Activated CD4-positive, alpha-beta T cell treated with anti-CD3 and anti-CD28 coated beads for 36 hours (primary cell): ENCODE measurements at regions of chr4 and their contacts with region 1.

Region 1: DNA sequence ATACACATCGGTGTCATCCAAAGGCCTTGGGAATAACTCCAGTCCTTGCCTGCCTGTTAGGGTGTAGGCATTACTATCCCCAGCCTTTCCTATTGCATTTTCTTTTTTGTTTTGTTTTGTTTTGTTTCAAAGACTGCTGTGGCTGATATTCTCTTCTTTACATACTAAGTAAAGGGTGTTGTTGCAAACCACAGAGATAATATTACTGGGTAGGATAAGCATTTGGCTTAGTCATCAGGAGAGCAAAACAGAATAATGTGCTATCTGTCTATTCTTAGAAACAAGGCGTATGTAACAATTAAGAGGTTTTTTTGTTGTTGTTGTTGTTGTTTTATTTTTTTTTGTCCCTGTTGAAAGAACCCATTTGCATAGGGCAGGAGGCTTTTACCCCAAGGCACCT is 41.8 kb downstream of the UGT2B28 start:
- DNase-seq: no peak
- ATAC-seq: no peak
- H3K4me3 Mint-ChIP-seq: no peak overlapping the region
- H3K27ac Mint-ChIP-seq: no peak overlapping the region
- H3K4me1 Mint-ChIP-seq: no peaks in the 10 kb centered on the region
- H3K27me3 Mint-ChIP-seq: no peaks in the 10 kb centered on the region

Region 2: DNA sequence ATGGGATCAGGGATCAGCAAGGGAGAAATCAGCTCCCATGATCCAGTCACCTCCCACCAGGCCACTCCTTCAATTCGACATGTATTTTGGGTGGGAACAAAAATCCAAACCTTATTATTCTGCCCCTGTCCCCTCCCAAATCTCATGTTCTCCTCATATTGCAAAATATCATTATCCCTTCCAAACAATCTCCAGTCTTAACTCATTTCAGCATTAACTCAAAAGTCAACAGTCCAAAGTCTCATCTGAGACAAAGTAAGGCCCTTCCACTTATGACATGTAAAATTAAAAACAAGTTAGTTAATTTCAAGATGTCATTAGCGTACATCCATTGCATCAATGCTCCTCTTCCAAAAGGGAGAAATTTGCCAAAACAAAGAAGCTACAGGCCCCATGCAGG is 151.6 kb after region 1 on chr4:
- CTCF ChIA-PET with region 1: no interaction called
- POLR2A ChIA-PET with region 1: no interaction called
- intact Hi-C with region 1: no loop called
- DNase-seq: no peak
- ATAC-seq: no peak
- H3K4me3 Mint-ChIP-seq: no peak overlapping the region
- H3K27ac Mint-ChIP-seq: no peak overlapping the region
- H3K4me1 Mint-ChIP-seq: no peaks in the 10 kb centered on the region
- H3K27me3 Mint-ChIP-seq: no peaks in the 10 kb centered on the region

Region 3: DNA sequence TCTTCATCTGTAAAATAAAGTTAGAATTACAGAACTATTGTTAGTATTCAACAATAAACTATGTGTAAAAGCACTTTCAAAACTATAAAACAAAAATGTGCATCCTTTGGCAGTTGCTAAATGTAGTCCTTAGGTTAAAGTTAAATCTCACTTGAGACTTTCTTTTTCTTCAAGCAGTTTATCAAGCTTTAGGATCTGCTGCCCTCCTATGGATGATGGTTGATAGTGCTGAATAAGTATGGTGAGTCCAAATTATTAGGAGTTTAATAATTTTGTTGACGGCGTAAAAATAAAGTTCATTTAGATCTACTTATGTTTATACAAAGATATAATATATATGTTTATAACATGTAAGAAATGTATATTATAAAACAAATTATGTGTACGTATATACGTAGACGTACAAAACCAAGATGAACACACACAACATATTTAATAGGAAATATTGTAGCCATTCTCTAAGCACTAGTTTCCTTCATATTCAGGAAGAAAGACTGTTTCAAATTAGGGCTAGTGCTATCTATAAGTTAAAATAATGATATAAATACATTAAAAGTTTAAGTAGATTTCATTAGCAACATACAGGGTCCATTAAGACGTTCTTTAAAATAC is 295.1 kb after region 1 on chr4:
- CTCF ChIA-PET with region 1: no interaction called
- POLR2A ChIA-PET with region 1: no interaction called
- intact Hi-C with region 1: loop called in 1 of 2 experiments (anchors 10 kb)
- DNase-seq: no peak
- ATAC-seq: no peak
- H3K4me3 Mint-ChIP-seq: no peak overlapping the region
- H3K27ac Mint-ChIP-seq: no peak overlapping the region
- H3K4me1 Mint-ChIP-seq: no peaks in the 10 kb centered on the region
- H3K27me3 Mint-ChIP-seq: no peaks in the 10 kb centered on the region

Region 4: DNA sequence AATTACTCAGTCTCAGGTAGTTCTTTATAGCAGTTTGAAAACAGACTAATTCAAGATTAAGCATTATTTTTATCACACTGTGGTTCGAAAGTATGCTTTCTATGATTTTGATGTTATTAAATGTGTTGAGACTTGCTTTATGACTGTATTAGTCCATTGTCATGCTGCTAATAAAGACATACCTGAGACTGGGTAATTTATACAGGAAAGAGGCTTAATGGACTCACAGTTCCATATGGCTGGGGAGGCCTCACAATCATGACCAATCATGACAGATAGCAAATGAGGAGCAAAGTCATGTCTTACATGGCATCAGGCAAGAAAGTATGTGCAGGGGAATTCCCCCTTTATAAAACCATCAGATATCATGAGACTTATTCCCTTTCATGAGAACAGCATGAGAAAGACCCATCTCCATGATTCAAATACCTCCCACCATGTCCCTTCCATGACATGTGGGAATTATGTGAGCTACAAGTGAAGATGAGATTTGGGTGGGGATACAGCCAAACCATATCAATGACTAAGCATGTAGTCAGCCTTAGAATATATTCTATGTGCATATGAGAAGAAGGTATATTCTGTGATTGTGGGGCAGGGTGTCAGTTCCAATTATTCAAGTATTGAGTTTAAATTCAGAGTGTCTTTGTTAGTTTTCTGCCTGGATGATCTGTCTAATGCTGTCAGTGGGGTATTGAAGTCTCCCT is 375.6 kb after region 1 on chr4:
- CTCF ChIA-PET with region 1: no interaction called
- POLR2A ChIA-PET with region 1: no interaction called
- intact Hi-C with region 1: no loop called
- DNase-seq: no peak
- ATAC-seq: no peak
- H3K4me3 Mint-ChIP-seq: no peak overlapping the region
- H3K27ac Mint-ChIP-seq: no peak overlapping the region
- H3K4me1 Mint-ChIP-seq: no peaks in the 10 kb centered on the region
- H3K27me3 Mint-ChIP-seq: no peaks in the 10 kb centered on the region